GM12878 (cell line): ENCODE measurements at regions of chrX and their contacts with region 1.

Region 1: DNA sequence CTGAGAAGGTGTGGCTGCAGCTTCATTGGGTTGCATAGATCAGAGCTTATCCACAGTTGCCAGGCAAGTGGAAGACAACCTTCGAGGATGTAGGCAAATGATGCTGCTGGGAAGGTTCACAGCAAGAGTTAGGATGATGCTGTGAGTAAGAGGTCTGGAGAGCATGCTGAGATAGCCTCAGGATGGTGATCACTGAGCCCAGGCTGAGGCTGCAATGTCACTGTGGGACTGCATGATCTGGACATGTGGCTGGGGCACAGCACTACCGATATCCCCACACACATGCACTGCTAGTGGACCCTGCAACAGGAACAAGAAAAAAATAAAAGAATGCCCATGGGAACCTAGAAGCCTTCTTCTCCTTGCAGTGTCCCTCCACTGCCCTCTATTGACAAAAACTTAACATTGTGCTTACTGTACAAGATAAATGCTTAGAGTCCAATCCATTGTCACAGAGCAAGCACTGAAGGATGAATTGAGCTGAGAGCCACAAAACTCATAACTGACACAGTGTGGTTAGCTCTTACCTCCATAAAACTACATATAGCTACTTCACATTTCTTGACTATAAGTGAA is 105.6 kb downstream of the CNKSR2 start:
- DNase-seq: no peak
- ATAC-seq: peak; percentile 87
- H3K4me3 ChIP-seq: no peak overlapping the region
- H3K27ac ChIP-seq: no peak overlapping the region
- H3K4me1 ChIP-seq: no peaks in the 10 kb centered on the region
- H3K27me3 ChIP-seq: no peaks in the 10 kb centered on the region
- CTCF ChIP-seq: peak; percentile 60 to 69 (median 66); a peak in 5 of 6 replicates
- EP300 ChIP-seq: no peak
- POLR2A ChIP-seq: no peak
- RAD21 ChIP-seq: peak; percentile 79

Region 2: DNA sequence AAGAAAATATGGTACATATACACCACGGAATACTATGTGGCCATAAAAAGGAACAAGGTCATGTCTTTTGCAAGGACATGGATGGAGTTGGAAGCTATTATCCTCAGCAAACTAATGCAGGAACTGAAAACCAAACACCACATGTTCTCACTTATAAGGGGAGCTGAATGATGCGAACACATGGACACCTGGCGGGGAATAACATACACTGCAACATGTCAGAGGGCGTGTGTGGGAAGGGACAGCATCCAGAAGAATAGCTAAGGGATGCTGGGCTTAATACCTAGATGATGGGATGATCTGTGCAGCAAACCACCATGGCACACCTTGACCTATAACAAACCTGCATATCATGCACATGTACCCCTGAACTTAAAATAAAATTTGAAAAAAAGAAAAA is 125.1 kb before region 1 on chrX:
- CTCF ChIA-PET with region 1: interaction called, 13 read pairs
- POLR2A ChIA-PET with region 1: no interaction called
- RAD21 ChIA-PET with region 1: no interaction called
- SMC1A ChIA-PET with region 1: no interaction called
- in situ Hi-C with region 1: no loop called
- intact Hi-C with region 1: no loop called
- DNase-seq: no peak
- ATAC-seq: peak; percentile 52; the same call in 2 of the 3 replicates
- H3K4me3 ChIP-seq: no peak overlapping the region
- H3K27ac ChIP-seq: no peak overlapping the region
- H3K4me1 ChIP-seq: no peaks in the 10 kb centered on the region
- H3K27me3 ChIP-seq: no peaks in the 10 kb centered on the region
- CTCF ChIP-seq: peak in 1 of 3 experiments; percentile 18; a peak in 1 of 6 replicates
- EP300 ChIP-seq: no peak
- POLR2A ChIP-seq: no peak
- RAD21 ChIP-seq: no peak

Region 3: DNA sequence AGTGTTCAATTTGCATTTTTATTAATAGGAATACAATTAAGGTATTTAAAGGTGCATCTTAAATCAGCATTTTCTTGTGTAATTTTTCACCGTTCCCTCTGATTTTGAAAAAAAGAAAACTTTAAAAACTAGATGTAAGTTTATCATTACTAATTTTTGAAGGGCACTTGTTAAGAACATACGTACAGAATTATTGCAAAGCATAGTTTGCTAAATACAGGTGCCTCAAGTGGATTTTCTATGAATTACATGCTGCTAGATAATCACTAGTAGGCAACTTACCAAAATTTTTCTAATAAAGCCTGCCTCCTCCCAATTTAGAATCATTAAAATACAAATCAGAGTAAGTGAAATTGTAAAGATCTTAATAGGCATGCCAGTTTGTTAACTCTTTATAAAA is 97.1 kb before region 1 on chrX:
- CTCF ChIA-PET with region 1: interaction called, 12 read pairs
- POLR2A ChIA-PET with region 1: no interaction called
- RAD21 ChIA-PET with region 1: no interaction called
- SMC1A ChIA-PET with region 1: interaction called, 3 read pairs
- in situ Hi-C with region 1: no loop called
- intact Hi-C with region 1: no loop called
- DNase-seq: no peak
- ATAC-seq: 0 out of 3 replicates have a peak, but pooled peaks have one; percentile 36
- H3K4me3 ChIP-seq: no peak overlapping the region
- H3K27ac ChIP-seq: no peak overlapping the region
- H3K4me1 ChIP-seq: no peaks in the 10 kb centered on the region
- H3K27me3 ChIP-seq: no peaks in the 10 kb centered on the region
- CTCF ChIP-seq: peak; percentile 10 to 22 (median 17); a peak in 2 of 6 replicates
- EP300 ChIP-seq: no peak
- POLR2A ChIP-seq: no peak
- RAD21 ChIP-seq: no peak

Region 4: GRCh38 chrX:21738210-21738949 is 258.6 kb after region 1 on chrX:
- CTCF ChIA-PET with region 1: no interaction called
- POLR2A ChIA-PET with region 1: no interaction called
- RAD21 ChIA-PET with region 1: no interaction called
- SMC1A ChIA-PET with region 1: no interaction called
- in situ Hi-C with region 1: no loop called
- intact Hi-C with region 1: loop called (anchors 10 kb)
- DNase-seq: no peak
- ATAC-seq: no peak
- H3K4me3 ChIP-seq: no peak overlapping the region
- H3K27ac ChIP-seq: no peak overlapping the region
- H3K4me1 ChIP-seq: no peaks in the 10 kb centered on the region
- H3K27me3 ChIP-seq: no peaks in the 10 kb centered on the region
- CTCF ChIP-seq: no peak
- EP300 ChIP-seq: no peak
- POLR2A ChIP-seq: no peak
- RAD21 ChIP-seq: no peak